ENCODE measurements at regions of chr1 and their contacts with region 1.

Region 1: GRCh38 chr1:211830330-211831142 is at the start of gene LPGAT1:
- DNase-seq: peak; percentile 82 to 90 (median 83)
- ATAC-seq: peak; percentile 93 to 98 (median 96)
- H3K4me3 ChIP-seq: peak within 1 kb of the TSS; percentile 54 to 99 (median 80)
- H3K27ac ChIP-seq: peak within 1 kb of the TSS; percentile 85 to 97 (median 91)
- H3K4me1 ChIP-seq: peaks cover 0 to 53% (median 20%) of the 10 kb centered on the region in 12 donors
- H3K27me3 ChIP-seq: no peaks in the 10 kb centered on the region
- CTCF ChIP-seq: peak; percentile 50 to 86 (median 77)
- POLR2A ChIP-seq: peak in 1 of 2 donors; percentile 41
- total RNA-seq, gene LPGAT1: 19.0 to 40.0 (median 30.9) TPM

Region 2: DNA sequence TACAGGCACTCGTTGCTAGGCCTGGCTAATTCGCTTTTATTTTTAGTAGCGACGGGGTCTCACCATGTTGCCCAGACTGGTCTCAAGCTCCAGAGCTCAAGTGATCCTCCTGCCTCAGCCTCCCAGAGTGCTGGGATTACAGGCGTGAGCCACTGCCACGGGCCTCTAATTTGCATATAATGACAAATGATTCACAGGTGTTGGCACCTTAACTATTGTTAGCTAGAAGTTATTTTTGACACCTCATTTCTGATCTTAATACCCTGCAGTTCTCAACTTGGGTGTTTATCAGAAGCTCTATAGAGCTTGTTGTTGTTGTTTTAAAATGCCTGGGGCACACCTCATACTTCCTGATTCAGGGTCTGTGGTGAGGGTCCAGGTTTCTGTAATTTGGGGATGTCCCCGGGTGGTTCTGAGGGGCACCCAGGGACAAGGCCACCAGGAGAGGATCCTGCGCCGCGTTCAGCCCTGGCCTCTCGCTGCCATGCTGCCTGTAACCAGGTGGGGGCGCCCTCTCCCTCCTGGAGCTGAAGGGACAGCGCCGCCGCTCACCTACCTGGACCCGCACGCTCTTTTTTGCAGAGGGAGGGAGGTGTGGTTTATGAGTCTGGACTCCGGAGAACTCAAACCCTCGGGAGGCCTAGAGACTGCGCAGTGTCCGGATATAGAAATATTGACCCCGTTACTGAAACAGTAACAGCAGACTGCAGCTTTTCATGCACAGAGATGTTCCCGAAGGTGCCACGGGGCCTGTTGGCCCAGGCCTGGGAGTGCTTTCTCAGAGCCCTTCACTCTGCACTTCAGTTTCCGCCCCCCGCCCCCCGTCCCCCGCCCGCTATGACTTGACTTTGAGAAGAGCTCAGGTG is 132.1 kb before region 1 on chr1:
- intact Hi-C with region 1: loop called (anchors 1 to 5 kb)
- DNase-seq: peak; percentile 64 to 89 (median 76)
- ATAC-seq: peak; percentile 57 to 95 (median 90)
- H3K4me3 ChIP-seq: peak overlapping the region in 8 of 12 donors; percentile 9 to 40 (median 31)
- H3K27ac ChIP-seq: no peak overlapping the region
- H3K4me1 ChIP-seq: peaks cover 0 to 11% (median 2%) of the 10 kb centered on the region in 12 donors
- H3K27me3 ChIP-seq: peaks cover 0 to 5% (median 0%) of the 10 kb centered on the region in 9 donors
- CTCF ChIP-seq: peak; percentile 87 to 98 (median 90)
- POLR2A ChIP-seq: no peak

Region 3: GRCh38 chr1:211703812-211704537 is 126.6 kb before region 1 on chr1:
- intact Hi-C with region 1: loop called in 8 of 10 experiments (anchors 2 to 5 kb)
- DNase-seq: no peak
- ATAC-seq: no peak
- H3K4me3 ChIP-seq: no peak overlapping the region
- H3K27ac ChIP-seq: no peak overlapping the region
- H3K4me1 ChIP-seq: peaks cover 0 to 12% (median 0%) of the 10 kb centered on the region in 12 donors
- H3K27me3 ChIP-seq: peaks cover 0 to 4% (median 0%) of the 10 kb centered on the region in 9 donors
- CTCF ChIP-seq: no peak
- POLR2A ChIP-seq: no peak

Region 4: GRCh38 chr1:211788626-211789025 is 41.9 kb before region 1 on chr1:
- intact Hi-C with region 1: loop called in 1 of 10 experiments (anchors 5 kb)
- DNase-seq: no peak
- ATAC-seq: no peak
- H3K4me3 ChIP-seq: no peak overlapping the region
- H3K27ac ChIP-seq: no peak overlapping the region
- H3K4me1 ChIP-seq: peaks cover 0 to 8% (median 4%) of the 10 kb centered on the region in 12 donors
- H3K27me3 ChIP-seq: no peaks in the 10 kb centered on the region
- CTCF ChIP-seq: no peak
- POLR2A ChIP-seq: no peak

Region 5: DNA sequence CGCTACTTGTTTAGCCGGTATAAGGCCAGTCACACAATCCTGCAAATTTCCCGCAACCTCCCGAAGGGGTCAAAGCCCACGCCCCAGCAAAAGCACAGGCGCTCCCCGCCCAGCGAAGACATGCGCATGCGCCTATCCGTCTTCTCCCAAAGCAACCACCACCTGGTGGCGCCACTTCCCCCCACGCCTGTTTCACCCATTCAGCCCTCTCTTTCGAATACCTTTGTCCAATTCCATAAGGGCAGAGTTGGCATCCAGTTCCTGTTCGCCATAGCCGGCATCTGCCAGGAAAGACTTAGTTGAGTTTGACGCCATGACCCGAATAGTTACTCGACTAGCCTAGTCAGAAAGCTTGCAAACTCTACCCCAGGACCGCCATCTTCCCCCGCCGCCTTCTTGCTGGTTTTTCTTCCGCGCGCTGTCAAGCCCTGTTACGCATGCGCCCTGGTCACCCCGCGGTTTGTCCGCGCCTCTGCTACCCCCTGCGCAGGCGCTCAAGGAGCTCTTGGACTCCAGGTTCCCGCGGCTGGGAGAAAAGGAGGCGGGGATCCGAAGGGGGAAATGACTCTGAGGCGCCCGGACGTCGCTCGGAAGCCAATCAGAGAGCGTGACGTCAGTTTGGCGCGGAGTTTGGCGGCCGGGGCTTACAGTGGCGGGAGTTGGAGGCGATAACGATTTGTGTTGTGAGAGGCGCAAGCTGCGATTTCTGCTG is 204.7 kb after region 1 on chr1 and contains the starts of genes DTL and INTS7:
- intact Hi-C with region 1: loop called in 1 of 10 experiments (anchors 10 kb)
- DNase-seq: peak; percentile 99 to 100 (median 99)
- ATAC-seq: peak; percentile 98 to 99 (median 98)
- H3K4me3 ChIP-seq: peak within 1 kb of the TSS; percentile 35 to 79 (median 62)
- H3K27ac ChIP-seq: peak within 1 kb of the TSS; percentile 72 to 93 (median 88)
- H3K4me1 ChIP-seq: peaks cover 0 to 49% (median 22%) of the 10 kb centered on the region in 12 donors
- H3K27me3 ChIP-seq: no peaks in the 10 kb centered on the region
- CTCF ChIP-seq: peak; percentile 87 to 99 (median 94)
- POLR2A ChIP-seq: peak in 1 of 2 donors; percentile 48
- total RNA-seq, gene DTL: 0.20 to 6.2 (median 0.47) TPM in 8 of 9 donors, not detected in the other
- total RNA-seq, gene INTS7: 5.8 to 12.9 (median 9.5) TPM